ENCODE measurements at regions of chr5 and their contacts with region 1.

Region 1: DNA sequence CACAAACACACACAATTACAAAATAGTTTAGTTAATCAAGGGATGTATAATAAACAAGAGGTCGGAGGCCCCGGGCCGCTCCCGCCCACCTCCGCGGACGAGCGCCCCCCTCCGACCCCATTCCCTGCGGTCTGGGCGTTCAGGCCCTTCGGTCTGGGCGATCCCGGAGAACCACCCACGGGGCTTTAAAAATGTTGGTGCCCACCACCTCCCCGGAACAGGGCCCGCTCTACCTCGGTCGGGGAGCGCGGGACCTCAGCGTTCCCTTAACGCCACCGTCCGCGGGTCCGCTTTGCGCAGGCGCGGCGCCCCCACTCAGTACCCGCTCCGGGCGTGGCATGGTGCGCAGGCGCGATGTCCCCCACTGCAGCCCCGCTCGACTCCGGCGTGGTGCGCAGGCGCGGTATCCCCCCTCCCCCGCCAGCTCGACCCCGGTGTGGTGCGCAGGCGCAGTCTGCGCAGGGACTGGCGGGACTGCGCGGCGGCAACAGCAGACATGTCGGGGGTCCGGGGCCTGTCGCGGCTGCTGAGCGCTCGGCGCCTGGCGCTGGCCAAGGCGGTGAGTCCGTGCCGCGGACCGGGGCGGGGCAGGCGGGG is at the starts of genes CCDC127 and SDHA:
- DNase-seq: peak; percentile 86 to 98
- H3K4me3 ChIP-seq: peak within 1 kb of the TSS; percentile 95 to 98
- H3K27ac ChIP-seq: peak within 1 kb of the TSS; percentile 80 to 91
- H3K4me1 ChIP-seq: peaks cover 0 to 12% of the 10 kb centered on the region in 2 donors
- H3K27me3 ChIP-seq: no peaks in the 10 kb centered on the region
- CTCF ChIP-seq: peak in 2 of 3 experiments; percentile 38 to 50
- total RNA-seq, gene CCDC127: 6.1 TPM
- total RNA-seq, gene SDHA: 41.1 TPM

Region 2: DNA sequence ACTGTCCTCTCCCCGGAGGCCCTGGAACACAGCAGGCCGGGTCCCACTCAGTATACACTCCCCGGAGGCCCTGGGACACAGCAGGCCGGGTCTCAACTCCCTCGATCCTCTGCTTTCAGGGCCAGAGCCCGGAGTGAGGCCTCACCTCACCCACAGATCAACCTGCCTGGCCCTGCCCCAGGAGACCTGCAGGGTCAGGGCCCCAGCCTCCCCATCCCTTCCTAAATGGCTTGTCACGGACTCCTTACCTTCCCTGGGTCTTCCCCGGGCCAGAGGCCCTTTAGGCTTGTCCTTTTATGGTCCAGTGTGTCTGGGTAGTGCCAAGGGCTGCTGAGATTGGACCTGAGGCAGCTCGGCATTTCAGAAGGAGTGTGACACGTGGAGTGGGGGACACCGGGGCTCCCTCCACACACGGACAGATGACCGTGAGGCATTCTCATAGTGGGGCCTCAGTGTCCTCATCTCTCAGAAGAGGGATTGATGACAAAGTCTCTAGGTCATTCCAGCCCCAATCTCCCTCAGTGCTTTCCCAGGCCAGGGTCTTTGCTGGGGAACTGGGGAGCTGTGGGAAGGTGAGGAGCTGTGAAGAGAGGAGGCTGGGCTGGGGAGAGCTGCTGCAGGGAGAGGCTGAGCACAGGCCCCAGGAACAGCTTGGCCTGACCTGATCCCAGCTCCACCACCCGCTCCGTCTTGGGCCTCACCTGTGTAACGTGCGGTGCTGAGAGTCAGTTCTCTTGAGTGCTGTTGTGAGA is 144.0 kb before region 1 on chr5:
- intact Hi-C with region 1: no loop called
- DNase-seq: no peak
- H3K4me3 ChIP-seq: no peak overlapping the region
- H3K27ac ChIP-seq: no peak overlapping the region
- H3K4me1 ChIP-seq: no peaks in the 10 kb centered on the region
- H3K27me3 ChIP-seq: no peaks in the 10 kb centered on the region
- CTCF ChIP-seq: no peak

Region 3: DNA sequence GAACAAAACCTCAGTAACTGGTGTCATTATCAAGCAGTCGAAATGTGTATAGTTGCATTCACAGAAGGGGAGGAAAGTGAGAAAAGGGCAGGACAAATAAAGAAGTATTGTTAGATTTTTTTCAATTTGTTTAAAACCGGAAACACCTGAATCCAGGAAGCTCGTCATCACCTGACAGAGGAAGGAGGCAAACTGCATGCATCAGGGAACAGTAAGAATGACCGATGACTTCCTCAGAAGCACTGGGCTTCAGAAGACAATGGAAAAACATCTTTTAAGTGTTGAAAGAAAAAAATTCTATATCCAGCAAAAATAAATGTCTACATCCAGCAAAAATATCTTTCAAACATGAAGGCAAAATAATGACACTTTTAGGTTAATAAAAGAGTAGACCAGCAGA is 96.5 kb before region 1 on chr5:
- intact Hi-C with region 1: no loop called
- DNase-seq: no peak
- H3K4me3 ChIP-seq: no peak overlapping the region
- H3K27ac ChIP-seq: no peak overlapping the region
- H3K4me1 ChIP-seq: no peaks in the 10 kb centered on the region
- H3K27me3 ChIP-seq: no peaks in the 10 kb centered on the region
- CTCF ChIP-seq: no peak

Region 4: GRCh38 chr5:188488-189481 is 29.2 kb before region 1 on chr5:
- intact Hi-C with region 1: loop called (anchors 1 kb)
- DNase-seq: peak; percentile 51 to 90
- H3K4me3 ChIP-seq: peak overlapping the region; percentile 7 to 45
- H3K27ac ChIP-seq: no peak overlapping the region
- H3K4me1 ChIP-seq: peaks cover 6% of the 10 kb centered on the region in 2 donors
- H3K27me3 ChIP-seq: no peaks in the 10 kb centered on the region
- CTCF ChIP-seq: peak; percentile 85 to 95 (median 92)

Region 5: DNA sequence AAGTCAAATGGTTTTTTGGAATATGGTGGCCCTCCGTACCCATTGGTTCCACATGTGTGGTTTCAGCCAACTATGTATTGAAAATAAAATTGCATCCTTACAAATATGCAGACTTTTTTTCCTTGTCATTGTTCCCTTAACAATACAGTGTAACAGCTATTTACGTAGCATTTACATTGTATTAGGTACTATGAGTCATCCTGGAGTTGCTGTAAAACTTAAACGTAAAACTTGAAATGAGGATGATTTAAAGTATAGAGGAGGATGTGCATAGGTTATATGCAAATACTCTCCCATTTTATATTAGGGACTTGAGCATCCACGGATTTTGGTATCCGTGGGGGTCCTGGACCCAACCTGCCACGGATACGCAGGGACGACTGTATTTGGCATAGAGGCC is 16.5 kb after region 1 on chr5:
- intact Hi-C with region 1: no loop called
- DNase-seq: no peak
- H3K4me3 ChIP-seq: no peak overlapping the region
- H3K27ac ChIP-seq: no peak overlapping the region
- H3K4me1 ChIP-seq: no peaks in the 10 kb centered on the region
- H3K27me3 ChIP-seq: no peaks in the 10 kb centered on the region
- CTCF ChIP-seq: no peak

Region 6: DNA sequence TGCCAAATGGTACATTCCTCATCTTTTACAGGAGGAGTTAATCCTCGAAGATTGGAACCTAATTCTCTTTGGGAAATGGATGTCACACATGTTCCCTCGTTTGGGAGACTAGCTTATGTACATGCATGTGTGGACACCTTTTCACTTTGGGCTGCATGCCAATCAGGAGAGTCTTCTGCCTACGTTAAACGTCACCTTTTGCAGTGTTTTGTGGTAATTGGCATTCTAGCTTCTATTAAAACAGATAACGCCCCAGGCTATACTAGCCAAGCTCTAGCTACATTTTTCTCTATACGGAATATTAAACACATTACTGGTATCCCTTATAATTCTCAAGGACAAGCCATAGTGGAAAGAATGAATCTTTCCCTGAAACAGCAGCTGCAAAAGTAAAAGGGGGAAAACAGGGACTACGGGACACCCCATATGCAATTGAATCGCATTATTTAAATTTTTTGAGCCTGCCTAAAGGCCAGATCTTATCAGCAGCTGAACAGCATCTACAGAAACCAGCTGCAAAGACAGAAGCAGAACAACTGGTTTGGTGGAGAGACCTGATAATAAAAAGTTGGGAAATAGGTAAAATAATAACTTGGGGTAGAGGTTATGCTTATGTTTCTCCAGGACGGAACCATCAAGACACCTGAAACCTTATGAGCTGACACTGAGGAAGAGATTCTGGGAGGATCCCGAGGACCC is 29.7 kb after region 1 on chr5:
- intact Hi-C with region 1: no loop called
- DNase-seq: no peak
- H3K4me3 ChIP-seq: no peak overlapping the region
- H3K27ac ChIP-seq: no peak overlapping the region
- H3K4me1 ChIP-seq: no peaks in the 10 kb centered on the region
- H3K27me3 ChIP-seq: no peaks in the 10 kb centered on the region
- CTCF ChIP-seq: no peak

Region 7: GRCh38 chr5:270340-270739 is 52.4 kb after region 1 on chr5:
- intact Hi-C with region 1: loop called (anchors 1 kb)
- DNase-seq: peak in 1 of 2 donors; percentile 62
- H3K4me3 ChIP-seq: peak overlapping the region in 1 of 2 donors; percentile 99
- H3K27ac ChIP-seq: no peak overlapping the region
- H3K4me1 ChIP-seq: peaks cover 0 to 7% of the 10 kb centered on the region in 2 donors
- H3K27me3 ChIP-seq: no peaks in the 10 kb centered on the region
- CTCF ChIP-seq: no peak

Region 8: GRCh38 chr5:442335-443238 is 224.6 kb after region 1 on chr5 and contains the start of gene EXOC3:
- intact Hi-C with region 1: loop called (anchors 5 kb)
- DNase-seq: peak in 1 of 2 donors; percentile 82
- H3K4me3 ChIP-seq: peak within 1 kb of the TSS; percentile 71 to 92
- H3K27ac ChIP-seq: peak within 1 kb of the TSS; percentile 76
- H3K4me1 ChIP-seq: peaks cover 12% of the 10 kb centered on the region in 2 donors
- H3K27me3 ChIP-seq: no peaks in the 10 kb centered on the region
- CTCF ChIP-seq: no peak
- total RNA-seq, gene EXOC3: 56.7 TPM

Measured in ascending aorta (tissue), 2 donors.